Activated B cell treated with CpG ODN at 0.5 μM for 24 hours (primary cell): ENCODE measurements at regions of chr4 and their contacts with region 1.

Region 1: DNA sequence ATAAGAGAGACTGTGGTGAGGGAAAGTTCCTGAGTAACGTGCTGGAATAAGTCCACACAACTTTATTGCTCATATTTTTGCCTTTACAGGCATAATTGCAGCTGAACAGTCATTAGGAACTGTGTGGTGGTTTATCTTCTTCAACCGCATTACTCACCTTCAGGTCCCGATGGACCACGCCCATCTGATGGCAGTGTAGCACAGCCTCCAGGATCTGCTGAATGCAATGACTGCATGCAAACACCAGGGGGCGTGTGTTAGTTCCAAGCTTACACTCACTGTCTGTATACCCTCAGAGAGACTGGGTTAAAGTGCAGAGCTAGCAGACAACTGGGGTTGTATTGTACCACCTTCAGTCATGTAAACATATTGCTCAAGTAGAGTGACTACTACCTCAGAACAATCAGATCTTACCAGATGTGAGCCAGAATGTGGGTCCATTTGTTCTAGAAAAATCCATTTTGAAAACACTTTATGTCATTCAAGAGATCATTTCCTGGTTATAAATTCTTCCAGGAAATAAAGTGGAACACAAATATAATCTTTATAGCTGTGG is 214.0 kb downstream of the CAMK2D start:
- DNase-seq: peak; percentile 62
- ATAC-seq: peak; percentile 98
- H3K4me3 Mint-ChIP-seq: no peak overlapping the region
- H3K27ac Mint-ChIP-seq: peak overlapping the region; percentile 69
- H3K4me1 Mint-ChIP-seq: peaks cover 23% of the 10 kb centered on the region
- H3K27me3 Mint-ChIP-seq: no peaks in the 10 kb centered on the region
- CTCF ChIP-seq: peak; percentile 67

Region 2: DNA sequence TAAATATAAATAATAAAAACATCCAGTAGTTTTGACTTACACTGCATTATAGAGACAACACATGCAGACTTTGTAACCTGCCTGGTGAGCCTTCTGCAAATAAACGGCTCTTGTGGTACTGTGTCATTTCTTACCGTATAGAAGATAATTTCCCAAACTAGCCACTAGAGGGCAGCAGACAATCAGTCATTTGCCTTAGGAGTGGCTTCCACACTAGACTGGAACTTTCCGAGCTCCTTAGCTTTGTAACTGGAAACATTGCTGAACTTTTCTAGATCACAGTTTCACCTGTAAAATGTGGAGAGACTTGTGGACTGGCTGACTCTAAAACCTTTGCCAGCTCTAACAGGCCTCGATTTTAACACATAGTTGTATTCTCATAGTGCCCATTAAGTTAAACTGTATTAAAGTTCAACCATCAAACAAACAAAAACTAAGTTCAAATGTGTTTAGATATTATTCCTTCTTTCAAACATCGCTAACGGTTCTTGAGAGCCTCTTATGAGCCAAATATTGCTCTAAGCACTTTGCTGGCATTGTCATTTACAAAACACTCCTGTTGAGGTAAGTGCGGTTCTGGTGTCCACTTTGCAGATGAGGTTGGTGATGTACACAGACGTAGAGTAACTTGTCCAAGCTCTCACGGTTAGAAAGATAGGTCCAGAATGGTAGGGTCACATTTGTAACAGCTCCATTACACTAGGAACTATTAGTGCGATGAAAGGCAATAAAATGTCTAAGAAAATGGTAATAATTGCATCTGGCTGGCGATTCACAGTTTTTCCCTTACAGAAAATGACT is 152.6 kb before region 1 on chr4:
- CTCF ChIA-PET with region 1: interaction called, 3 read pairs
- POLR2A ChIA-PET with region 1: no interaction called
- intact Hi-C with region 1: loop called (anchors 1 kb)
- DNase-seq: no peak
- ATAC-seq: peak; percentile 89
- H3K4me3 Mint-ChIP-seq: no peak overlapping the region
- H3K27ac Mint-ChIP-seq: no peak overlapping the region
- H3K4me1 Mint-ChIP-seq: no peaks in the 10 kb centered on the region
- H3K27me3 Mint-ChIP-seq: peaks cover 2% of the 10 kb centered on the region
- CTCF ChIP-seq: peak; percentile 24

Region 3: GRCh38 chr4:113618205-113618604 is 70.6 kb after region 1 on chr4:
- CTCF ChIA-PET with region 1: interaction called, 4 read pairs
- POLR2A ChIA-PET with region 1: interaction called, 12 read pairs
- intact Hi-C with region 1: loop called (anchors 1 kb)
- DNase-seq: no peak
- ATAC-seq: peak; percentile 83
- H3K4me3 Mint-ChIP-seq: no peak overlapping the region
- H3K27ac Mint-ChIP-seq: no peak overlapping the region
- H3K4me1 Mint-ChIP-seq: peaks cover 48% of the 10 kb centered on the region
- H3K27me3 Mint-ChIP-seq: no peaks in the 10 kb centered on the region
- CTCF ChIP-seq: no peak

Region 4: DNA sequence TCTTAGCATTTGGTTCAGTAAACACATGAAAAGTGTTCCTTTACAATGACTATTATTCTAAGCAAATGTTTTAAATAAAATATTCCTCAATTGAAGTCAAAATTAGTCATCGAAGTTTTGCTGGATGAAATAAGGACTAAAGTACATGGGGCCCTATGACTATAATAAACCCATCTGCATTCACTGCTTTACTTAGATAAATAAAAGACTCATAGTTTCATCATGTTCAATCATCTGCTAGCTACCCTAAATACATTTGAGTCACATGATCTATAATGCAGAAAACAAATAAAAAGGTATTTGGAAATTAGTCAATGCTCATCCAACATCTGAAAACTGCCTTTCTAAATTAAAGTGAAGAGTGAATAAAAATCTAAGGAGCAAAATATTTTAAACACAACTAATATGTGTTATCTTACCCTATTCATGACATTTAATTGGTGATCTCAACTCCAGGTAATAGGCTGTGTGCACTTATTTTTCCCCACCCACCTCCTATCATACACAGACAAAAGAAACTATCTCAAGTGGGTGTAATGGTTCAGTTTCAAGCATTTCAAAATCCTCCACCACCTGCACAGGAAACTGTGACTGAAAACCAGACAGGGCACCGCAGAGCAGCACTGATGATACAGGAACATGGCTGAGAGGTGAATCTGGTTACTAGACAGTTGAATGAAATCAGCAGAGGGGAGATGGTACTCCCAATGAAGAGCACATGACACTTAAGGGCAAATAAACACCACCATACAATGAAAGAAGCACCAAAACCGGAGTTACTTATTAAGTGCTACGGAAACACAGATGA is 135.4 kb after region 1 on chr4:
- CTCF ChIA-PET with region 1: interaction called, 5 read pairs
- POLR2A ChIA-PET with region 1: no interaction called
- intact Hi-C with region 1: loop called (anchors 1 kb)
- DNase-seq: peak; percentile 33
- ATAC-seq: peak; percentile 93
- H3K4me3 Mint-ChIP-seq: peak overlapping the region; percentile 13
- H3K27ac Mint-ChIP-seq: peak overlapping the region; percentile 70
- H3K4me1 Mint-ChIP-seq: peaks cover 53% of the 10 kb centered on the region
- H3K27me3 Mint-ChIP-seq: no peaks in the 10 kb centered on the region
- CTCF ChIP-seq: no peak

Region 5: GRCh38 chr4:113893546-113893945 is 346.0 kb after region 1 on chr4:
- CTCF ChIA-PET with region 1: no interaction called
- POLR2A ChIA-PET with region 1: no interaction called
- intact Hi-C with region 1: loop called (anchors 5 kb)
- DNase-seq: no peak
- ATAC-seq: no peak
- H3K4me3 Mint-ChIP-seq: no peak overlapping the region
- H3K27ac Mint-ChIP-seq: no peak overlapping the region
- H3K4me1 Mint-ChIP-seq: no peaks in the 10 kb centered on the region
- H3K27me3 Mint-ChIP-seq: peaks cover 1% of the 10 kb centered on the region
- CTCF ChIP-seq: no peak

Region 6: DNA sequence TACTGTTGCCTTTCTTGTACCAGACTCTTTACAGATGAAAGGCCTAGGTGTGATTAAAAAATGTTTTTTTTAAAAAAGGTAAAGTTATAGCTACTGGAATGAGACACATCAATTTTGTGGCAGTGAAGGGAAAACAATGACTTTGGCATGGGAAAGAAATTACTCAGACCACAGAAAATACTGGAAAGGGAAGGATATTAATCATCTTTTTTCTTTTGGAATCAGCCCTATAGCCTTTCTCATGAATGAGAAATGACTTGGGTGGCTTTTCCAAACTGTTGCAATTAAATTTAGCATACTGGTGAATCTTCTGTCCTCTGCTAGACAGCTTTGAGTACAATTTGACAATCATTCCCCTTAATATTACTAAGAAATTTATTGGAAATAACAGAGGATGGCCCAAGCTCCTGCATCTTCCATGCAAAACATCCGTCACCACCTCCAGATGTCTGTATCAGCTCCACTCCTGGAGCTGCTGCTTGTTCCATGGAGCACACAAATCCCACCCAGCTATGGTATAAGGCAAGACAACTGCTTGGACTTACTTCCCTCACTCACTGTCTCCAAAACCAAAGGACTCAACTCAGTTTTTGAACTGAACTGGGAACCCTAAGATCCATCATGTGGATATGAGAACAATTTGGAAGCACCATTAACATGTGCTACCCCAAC is 529.5 kb after region 1 on chr4:
- CTCF ChIA-PET with region 1: no interaction called
- POLR2A ChIA-PET with region 1: no interaction called
- intact Hi-C with region 1: loop called (anchors 5 kb)
- DNase-seq: no peak
- ATAC-seq: no peak
- H3K4me3 Mint-ChIP-seq: no peak overlapping the region
- H3K27ac Mint-ChIP-seq: no peak overlapping the region
- H3K4me1 Mint-ChIP-seq: no peaks in the 10 kb centered on the region
- H3K27me3 Mint-ChIP-seq: peaks cover 3% of the 10 kb centered on the region
- CTCF ChIP-seq: no peak